Left cardiac atrium (tissue), 4 donors: ENCODE measurements at regions of chr9 and their contacts with region 1.

Region 1: DNA sequence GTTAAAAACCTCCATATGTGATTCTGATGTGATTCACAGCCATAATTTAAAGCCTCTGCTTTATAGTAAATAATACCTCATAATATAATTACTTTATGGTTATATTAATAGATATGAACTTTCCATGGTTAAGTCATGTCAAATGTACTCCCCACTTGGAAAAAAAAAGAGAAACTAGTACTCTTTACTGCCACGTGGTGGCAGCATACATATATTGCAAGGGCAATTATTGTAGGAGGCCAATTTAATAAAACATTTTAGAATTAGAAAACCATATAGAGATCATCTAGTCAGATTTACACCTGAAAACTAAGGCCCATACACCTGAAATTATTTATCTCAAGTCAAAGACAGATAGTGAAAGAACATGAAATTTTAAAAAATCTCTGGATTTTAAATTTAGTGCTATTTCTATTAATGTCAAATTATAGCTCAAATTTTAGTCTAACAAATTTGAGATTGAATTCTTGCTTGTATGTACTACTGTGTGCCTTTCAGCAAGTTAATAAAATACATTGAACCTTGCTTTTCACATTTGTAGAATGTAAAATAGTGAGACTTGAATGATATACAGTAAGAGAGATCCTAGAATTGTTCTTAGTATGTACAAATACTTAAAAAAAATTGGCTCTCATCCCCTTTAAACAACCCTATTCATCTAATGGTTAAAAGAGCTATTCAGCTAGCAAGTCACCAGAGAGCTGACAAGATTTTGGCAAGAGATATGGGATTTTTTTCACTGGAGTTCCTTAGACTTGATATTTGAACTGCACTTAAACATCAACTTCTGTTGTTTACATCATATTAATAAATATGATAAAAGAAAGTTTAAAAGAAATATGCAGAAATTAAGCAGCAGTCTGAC is 603.8 kb downstream of the TLE4 start:
- DNase-seq: no peak
- ATAC-seq: no peak

Region 2: DNA sequence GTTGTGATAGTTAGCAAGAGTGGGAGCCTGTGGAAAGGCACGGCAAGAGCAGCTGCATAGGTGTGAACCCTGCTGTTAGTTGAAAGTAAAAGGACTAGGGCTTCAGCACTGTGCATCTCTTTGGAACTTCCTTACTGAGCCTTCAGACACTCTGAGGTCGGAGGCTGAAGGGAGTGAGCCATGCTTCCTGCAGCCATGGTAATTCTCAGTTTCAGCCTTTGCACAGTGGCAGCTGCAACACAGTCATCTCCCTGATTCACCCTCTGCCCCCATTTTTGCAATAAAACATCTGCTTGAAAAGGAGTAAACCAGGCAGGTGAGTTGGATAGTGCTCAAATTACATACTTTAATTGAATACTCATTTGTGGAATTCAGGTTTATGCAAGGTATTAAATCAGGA is 610.3 kb before region 1 on chr9:
- intact Hi-C with region 1: loop called in 1 of 2 experiments (anchors 10 kb)
- DNase-seq: no peak
- ATAC-seq: no peak